AG04449 (cell line): ENCODE measurements at regions of chr11 and their contacts with region 1.

Region 1: DNA sequence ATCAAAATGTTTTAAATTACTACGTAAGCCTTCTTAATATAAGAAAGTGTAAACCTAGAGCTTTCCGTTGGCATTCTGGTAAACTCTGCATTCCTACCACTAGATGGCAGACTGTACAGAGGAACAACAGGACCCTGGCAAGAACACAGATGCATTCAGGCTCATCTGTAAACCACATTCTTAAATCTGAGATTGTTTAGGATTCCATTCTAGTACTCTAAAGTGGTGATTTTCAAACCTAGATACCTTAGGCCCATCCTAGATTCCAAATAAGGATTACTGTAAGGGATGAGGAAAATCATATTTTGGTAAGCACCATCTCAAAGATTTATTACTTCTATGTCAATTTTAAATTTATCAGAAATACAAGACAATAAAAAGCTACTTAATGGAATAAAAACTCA is 26.9 kb downstream of the PICALM start:
- DNase-seq: peak; percentile 74
- H3K4me3 ChIP-seq: no peak overlapping the region
- CTCF ChIP-seq: peak; percentile 64

Region 2: GRCh38 chr11:85694386-85694980 is 347.5 kb before region 1 on chr11:
- CTCF ChIA-PET with region 1: no interaction called
- POLR2A ChIA-PET with region 1: no interaction called
- DNase-seq: no peak
- H3K4me3 ChIP-seq: no peak overlapping the region
- CTCF ChIP-seq: peak; percentile 56

Region 3: GRCh38 chr11:86021377-86021776 is 20.6 kb before region 1 on chr11:
- CTCF ChIA-PET with region 1: interaction called, 50 read pairs
- POLR2A ChIA-PET with region 1: no interaction called
- DNase-seq: no peak
- H3K4me3 ChIP-seq: no peak overlapping the region
- CTCF ChIP-seq: no peak

Region 4: GRCh38 chr11:86058360-86058759 is 16.4 kb after region 1 on chr11:
- CTCF ChIA-PET with region 1: interaction called, 29 read pairs
- POLR2A ChIA-PET with region 1: no interaction called
- DNase-seq: no peak
- H3K4me3 ChIP-seq: no peak overlapping the region
- CTCF ChIP-seq: no peak

Region 5: GRCh38 chr11:86182976-86183584 is 141.1 kb after region 1 on chr11:
- CTCF ChIA-PET with region 1: interaction called, 17 read pairs
- POLR2A ChIA-PET with region 1: no interaction called
- DNase-seq: no peak
- H3K4me3 ChIP-seq: no peak overlapping the region
- CTCF ChIP-seq: no peak

Region 6: GRCh38 chr11:86202013-86202336 is 160.0 kb after region 1 on chr11:
- CTCF ChIA-PET with region 1: interaction called, 73 read pairs
- POLR2A ChIA-PET with region 1: no interaction called
- DNase-seq: no peak
- H3K4me3 ChIP-seq: no peak overlapping the region
- CTCF ChIP-seq: no peak